OCI-LY7 (cell line): ENCODE measurements at regions of chr1 and their contacts with region 1.

Region 1: GRCh38 chr1:93244298-93245069 is 64.0 kb downstream of the CCDC18 start:
- DNase-seq: no peak
- H3K4me3 ChIP-seq: no peak overlapping the region
- H3K27ac ChIP-seq: no peak overlapping the region
- H3K4me1 ChIP-seq: no peaks in the 10 kb centered on the region
- CTCF ChIP-seq: no peak

Region 2: GRCh38 chr1:93114391-93114790 is 130.1 kb before region 1 on chr1:
- CTCF ChIA-PET with region 1: no interaction called
- POLR2A ChIA-PET with region 1: no interaction called
- intact Hi-C with region 1: no loop called
- DNase-seq: no peak
- H3K4me3 ChIP-seq: no peak overlapping the region
- H3K27ac ChIP-seq: no peak overlapping the region
- H3K4me1 ChIP-seq: peaks cover 26% of the 10 kb centered on the region
- CTCF ChIP-seq: no peak

Region 3: GRCh38 chr1:93200086-93200620 is 44.3 kb before region 1 on chr1:
- CTCF ChIA-PET with region 1: no interaction called
- POLR2A ChIA-PET with region 1: no interaction called
- intact Hi-C with region 1: loop called (anchors 5 kb)
- DNase-seq: no peak
- H3K4me3 ChIP-seq: no peak overlapping the region
- H3K27ac ChIP-seq: no peak overlapping the region
- H3K4me1 ChIP-seq: no peaks in the 10 kb centered on the region
- CTCF ChIP-seq: no peak

Region 4: DNA sequence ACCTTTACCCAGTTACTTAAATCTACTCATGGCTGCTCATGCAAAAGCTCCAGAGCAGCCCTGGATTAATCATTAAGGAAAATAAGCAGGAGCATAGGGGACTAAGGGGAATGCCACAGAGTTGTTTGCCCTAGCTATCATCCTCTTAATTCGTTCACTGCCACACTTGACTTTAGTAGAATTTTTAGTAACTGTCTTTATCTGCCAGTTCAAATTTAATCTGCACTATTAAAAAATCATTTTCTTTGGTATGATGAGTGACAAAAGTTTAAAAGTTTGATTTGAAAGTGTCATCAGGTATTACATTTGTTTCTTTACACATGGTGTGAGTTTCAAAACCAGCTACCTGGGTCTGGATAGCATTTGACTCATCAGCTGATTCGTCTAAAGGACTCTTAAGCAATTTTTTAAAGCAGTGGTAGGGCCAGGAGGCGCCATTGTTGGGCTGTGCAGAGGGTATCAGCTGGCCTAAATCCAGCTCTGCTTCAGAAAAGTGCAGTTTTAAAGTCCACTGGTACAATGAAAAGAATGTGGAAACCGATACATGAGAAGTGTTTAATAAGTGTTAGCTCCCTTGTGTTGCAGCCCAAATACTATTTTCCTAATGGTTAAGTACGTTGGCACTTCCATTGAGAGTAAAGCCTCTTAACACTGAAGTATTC is 31.3 kb after region 1 on chr1:
- CTCF ChIA-PET with region 1: no interaction called
- POLR2A ChIA-PET with region 1: no interaction called
- intact Hi-C with region 1: no loop called
- DNase-seq: no peak
- H3K4me3 ChIP-seq: no peak overlapping the region
- H3K27ac ChIP-seq: no peak overlapping the region
- H3K4me1 ChIP-seq: no peaks in the 10 kb centered on the region
- CTCF ChIP-seq: no peak